Activated naive CD4-positive, alpha-beta T cell treated with anti-CD3 and anti-CD28 coated beads for 36 hours (primary cell): ENCODE measurements at regions of chr11 and their contacts with region 1.

Region 1: GRCh38 chr11:85627998-85628770 is at the start of gene TMEM126B:
- DNase-seq: peak; percentile 98
- H3K4me3 Mint-ChIP-seq: peak within 1 kb of the TSS; percentile 99
- H3K27ac Mint-ChIP-seq: peak within 1 kb of the TSS; percentile 96
- H3K4me1 Mint-ChIP-seq: peaks cover 33% of the 10 kb centered on the region
- H3K27me3 Mint-ChIP-seq: no peaks in the 10 kb centered on the region
- total RNA-seq, gene TMEM126B: 72.6 to 79.0 TPM

Region 2: DNA sequence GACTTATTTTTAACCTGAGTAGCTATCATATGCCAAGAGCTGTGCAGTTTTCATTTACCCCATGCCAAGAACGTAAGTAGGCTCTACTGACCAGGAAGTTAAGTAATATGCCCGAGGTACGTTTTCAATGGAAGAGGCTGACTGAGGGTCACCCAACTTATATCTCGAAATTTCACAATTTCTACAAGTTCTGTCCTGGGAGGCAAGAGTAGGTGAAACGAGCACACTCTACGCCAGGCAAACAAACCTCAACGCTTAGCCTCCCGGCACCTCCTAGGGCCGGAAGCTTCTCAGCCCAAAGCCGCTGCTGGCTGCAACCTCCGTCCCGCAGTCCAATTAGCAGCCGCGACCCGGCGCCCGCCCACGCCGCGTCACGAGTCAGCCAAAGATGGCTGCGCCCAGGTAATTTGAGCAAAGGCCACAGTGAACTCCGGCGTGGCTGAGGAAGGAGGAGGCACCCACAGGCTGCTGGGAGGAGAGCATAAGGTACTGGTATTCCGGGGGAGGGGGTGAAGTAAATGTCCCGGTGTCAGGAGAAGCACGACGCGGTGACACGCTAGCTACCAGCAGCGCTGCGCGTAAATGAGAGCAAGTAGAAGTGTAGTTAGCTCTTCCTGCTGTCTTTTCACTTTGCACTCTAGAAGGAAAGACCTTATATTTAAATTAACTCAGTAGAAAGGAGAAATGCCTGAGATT is 19.6 kb after region 1 on chr11 and contains the start of gene TMEM126A:
- CTCF ChIA-PET with region 1: interaction called, 4 read pairs
- intact Hi-C with region 1: loop called (anchors 1 kb)
- DNase-seq: peak; percentile 96
- H3K4me3 Mint-ChIP-seq: peak within 1 kb of the TSS; percentile 90
- H3K27ac Mint-ChIP-seq: peak within 1 kb of the TSS; percentile 96
- H3K4me1 Mint-ChIP-seq: peaks cover 29% of the 10 kb centered on the region
- H3K27me3 Mint-ChIP-seq: peaks cover 6% of the 10 kb centered on the region
- total RNA-seq, gene TMEM126A: 47.5 to 56.2 TPM

Region 3: GRCh38 chr11:86116386-86116726 is 488.2 kb after region 1 on chr11:
- CTCF ChIA-PET with region 1: no interaction called
- intact Hi-C with region 1: loop called (anchors 2 kb)
- DNase-seq: peak; percentile 57
- H3K4me3 Mint-ChIP-seq: no peak overlapping the region
- H3K27ac Mint-ChIP-seq: peak overlapping the region; percentile 17
- H3K4me1 Mint-ChIP-seq: peaks cover 28% of the 10 kb centered on the region
- H3K27me3 Mint-ChIP-seq: peaks cover 5% of the 10 kb centered on the region

Region 4: DNA sequence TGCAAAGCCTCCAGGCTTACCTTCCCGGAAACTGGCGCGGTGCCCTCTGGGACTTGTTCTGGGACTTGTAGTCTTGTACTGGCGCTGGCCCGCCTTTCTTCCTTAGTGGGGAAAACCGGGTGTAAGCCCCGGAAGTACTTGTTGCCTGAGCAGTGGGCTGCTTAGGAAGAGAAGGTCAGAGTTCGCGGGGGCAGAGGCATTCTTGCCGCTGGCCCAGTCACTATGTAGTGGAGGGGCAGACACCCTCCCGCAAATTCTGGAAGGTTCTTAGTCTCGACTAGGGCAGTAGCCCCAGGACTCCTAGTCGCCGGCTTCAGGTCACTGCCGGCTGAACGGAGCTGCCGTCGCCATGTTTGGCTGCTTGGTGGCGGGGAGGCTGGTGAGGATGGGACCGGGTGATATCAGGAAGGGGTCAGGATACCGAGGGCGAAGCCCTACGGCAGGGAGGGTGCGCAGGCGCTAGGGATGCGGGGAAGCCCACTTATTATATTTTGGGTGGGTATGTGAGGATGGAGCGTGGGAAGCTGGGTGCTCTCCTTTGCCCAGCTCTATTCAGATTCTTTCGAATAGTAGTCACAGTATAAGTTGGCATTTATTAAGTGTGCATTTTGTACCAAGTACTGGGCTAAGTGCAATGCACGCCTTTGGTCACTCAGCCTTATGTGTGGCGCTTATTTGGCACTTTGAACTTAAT is 674.1 kb after region 1 on chr11 and contains the start of gene HIKESHI:
- CTCF ChIA-PET with region 1: no interaction called
- intact Hi-C with region 1: loop called (anchors 1 kb)
- DNase-seq: peak; percentile 99
- H3K4me3 Mint-ChIP-seq: peak within 1 kb of the TSS; percentile 99
- H3K27ac Mint-ChIP-seq: peak within 1 kb of the TSS; percentile 94
- H3K4me1 Mint-ChIP-seq: peaks cover 26% of the 10 kb centered on the region
- H3K27me3 Mint-ChIP-seq: no peaks in the 10 kb centered on the region
- total RNA-seq, gene HIKESHI: 40.4 to 41.9 TPM